Left colon (tissue), 2 donors: ENCODE measurements at regions of chr1 and their contacts with region 1.

Region 1: DNA sequence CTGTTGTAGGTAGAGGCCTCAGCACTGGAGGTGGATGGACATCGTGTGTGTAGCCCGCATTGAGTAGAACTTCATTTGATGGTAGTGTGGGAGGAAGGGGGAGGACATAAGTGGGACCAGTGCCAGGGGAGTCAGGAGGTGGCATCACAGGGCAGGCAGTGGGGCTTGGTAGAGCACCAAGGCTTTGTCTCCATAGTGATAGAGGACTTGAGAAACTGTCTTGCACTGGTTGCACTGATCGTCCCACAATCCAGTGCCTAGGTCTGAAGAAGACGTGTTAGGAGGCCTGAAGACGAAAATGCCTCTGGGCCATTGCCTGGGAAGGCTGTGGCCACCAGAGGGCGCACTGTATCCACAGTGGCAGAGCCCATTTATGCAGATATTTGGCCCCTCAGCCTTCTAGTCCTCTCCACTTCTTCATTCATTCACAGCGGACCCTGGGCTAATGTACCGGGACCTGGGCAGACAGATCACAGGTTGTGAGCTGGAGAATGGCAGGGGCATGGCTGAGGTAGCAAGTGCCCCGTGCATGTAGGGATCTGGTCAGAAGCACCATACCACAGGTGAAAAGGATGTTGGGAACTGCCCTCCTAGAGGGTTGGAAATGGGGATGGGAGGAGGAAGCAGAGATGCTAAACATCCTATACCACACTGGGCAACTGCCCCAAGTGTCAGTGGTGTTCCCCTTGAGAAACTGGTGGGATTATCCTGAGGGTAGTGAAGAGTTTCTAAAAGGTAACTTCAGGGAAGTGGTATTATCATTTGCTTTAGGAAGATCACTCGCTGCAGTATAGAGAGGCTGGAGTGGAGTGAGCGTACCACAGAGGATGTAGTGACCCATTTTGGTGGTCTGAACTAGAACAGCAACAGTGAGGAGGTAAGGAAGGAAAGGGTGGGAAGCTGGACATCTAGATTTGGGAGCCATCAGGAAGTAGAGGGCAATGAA is 95.3 kb downstream of the PIK3R3 start:
- DNase-seq: peak; percentile 69 to 94
- ATAC-seq: peak; percentile 63

Region 2: GRCh38 chr1:46179138-46180081 is 142.2 kb after region 1 on chr1:
- intact Hi-C with region 1: loop called (anchors 2 to 5 kb)
- DNase-seq: peak; percentile 81 to 87
- ATAC-seq: peak; percentile 55

Region 3: DNA sequence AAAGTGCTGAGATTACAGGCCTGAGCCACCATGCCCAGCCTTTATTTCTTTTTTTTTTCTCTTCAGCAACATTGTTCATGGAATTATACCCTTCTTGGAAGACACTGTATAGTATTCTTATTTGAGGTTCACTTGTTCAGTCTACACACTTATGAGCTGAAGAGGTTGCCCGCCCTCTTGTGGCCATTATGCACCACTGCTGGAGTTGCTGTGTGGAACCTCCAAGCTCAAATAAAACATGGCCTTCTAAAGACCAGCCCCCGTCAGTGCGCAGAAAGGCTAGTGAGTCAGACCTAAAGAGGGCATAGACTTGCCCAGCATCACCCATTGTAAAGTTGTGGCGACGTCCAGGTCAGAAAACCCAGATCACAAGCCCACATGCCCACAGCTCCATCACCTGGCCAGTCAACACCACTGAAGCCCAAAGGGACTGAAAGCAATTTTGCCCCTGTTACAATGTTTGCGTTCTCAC is 186.3 kb after region 1 on chr1:
- intact Hi-C with region 1: loop called in 1 of 2 experiments (anchors 5 kb)
- DNase-seq: peak; percentile 58 to 77
- ATAC-seq: peak; percentile 97